MCF 10A (cell line): ENCODE measurements at regions of chr1 and their contacts with region 1.

Region 1: DNA sequence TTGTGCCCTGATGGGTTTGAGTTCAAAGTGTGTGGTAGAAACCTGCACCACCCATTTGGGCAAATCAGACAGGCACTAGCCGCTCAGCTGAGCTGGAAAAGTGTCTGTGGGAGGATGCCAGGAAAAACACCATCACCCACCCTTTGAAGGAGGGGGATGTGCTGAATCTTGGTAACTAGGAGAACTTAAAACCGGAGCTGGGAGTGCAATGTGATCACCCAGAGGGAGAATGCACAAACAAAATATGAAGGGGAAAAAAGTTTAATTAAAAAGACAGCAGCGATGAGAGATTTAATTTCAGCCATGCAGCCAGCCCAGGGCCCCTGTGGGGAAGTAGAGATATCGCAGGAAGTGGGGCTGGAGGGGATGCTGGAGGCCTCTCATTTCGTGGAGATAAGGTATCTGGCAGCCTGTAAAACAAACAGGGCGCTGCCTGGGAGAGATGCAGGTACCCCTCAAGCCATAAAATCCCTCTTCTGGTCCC is 86.8 kb upstream of the BCAR3 start:
- DNase-seq: no peak
- H3K4me3 Mint-ChIP-seq: peak overlapping the region; percentile 25
- H3K27ac Mint-ChIP-seq: peak overlapping the region; percentile 52
- H3K4me1 Mint-ChIP-seq: peaks cover 63% of the 10 kb centered on the region
- H3K27me3 Mint-ChIP-seq: no peaks in the 10 kb centered on the region
- CTCF ChIP-seq: no peak

Region 2: GRCh38 chr1:93148001-93148400 is 620.4 kb before region 1 on chr1:
- CTCF ChIA-PET with region 1: no interaction called
- POLR2A ChIA-PET with region 1: no interaction called
- intact Hi-C with region 1: no loop called
- DNase-seq: no peak
- H3K4me3 Mint-ChIP-seq: no peak overlapping the region
- H3K27ac Mint-ChIP-seq: no peak overlapping the region
- H3K4me1 Mint-ChIP-seq: peaks cover 4% of the 10 kb centered on the region
- H3K27me3 Mint-ChIP-seq: no peaks in the 10 kb centered on the region
- CTCF ChIP-seq: no peak

Region 3: DNA sequence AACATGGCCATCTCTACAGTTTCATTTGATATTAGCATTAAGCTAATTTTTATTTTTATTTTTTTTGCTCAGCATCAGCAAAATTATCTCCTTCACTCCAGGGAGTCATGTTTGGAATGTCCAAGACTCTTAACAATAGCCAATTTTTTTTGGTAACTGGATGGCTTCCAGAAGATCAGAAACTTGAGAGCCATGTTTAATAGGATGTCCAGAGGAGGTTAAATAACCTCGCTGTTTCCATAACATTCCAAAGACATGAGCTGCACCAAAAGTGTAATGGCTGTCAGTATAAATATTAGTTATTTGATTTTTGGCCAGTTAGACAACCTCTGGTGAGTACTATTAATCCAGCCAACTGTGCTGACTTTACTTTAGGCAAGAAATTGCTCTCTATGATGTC is 29.9 kb after region 1 on chr1:
- CTCF ChIA-PET with region 1: no interaction called
- POLR2A ChIA-PET with region 1: interaction called, 10 read pairs
- intact Hi-C with region 1: no loop called
- DNase-seq: peak; percentile 75
- H3K4me3 Mint-ChIP-seq: no peak overlapping the region
- H3K27ac Mint-ChIP-seq: peak overlapping the region; percentile 13
- H3K4me1 Mint-ChIP-seq: peaks cover 12% of the 10 kb centered on the region
- H3K27me3 Mint-ChIP-seq: no peaks in the 10 kb centered on the region
- CTCF ChIP-seq: no peak